A673 (cell line): ENCODE measurements at regions of chr9 and their contacts with region 1.

Region 1: GRCh38 chr9:71058660-71059059 is 62.8 kb downstream of the TRPM3 start:
- DNase-seq: no peak
- H3K4me3 ChIP-seq: no peak overlapping the region
- H3K27ac ChIP-seq: no peak overlapping the region
- H3K4me1 ChIP-seq: no peaks in the 10 kb centered on the region
- H3K27me3 ChIP-seq: peaks cover 14% of the 10 kb centered on the region
- CTCF ChIP-seq: no peak

Region 2: GRCh38 chr9:70701163-70701562 is 357.5 kb before region 1 on chr9:
- CTCF ChIA-PET with region 1: no interaction called
- POLR2A ChIA-PET with region 1: no interaction called
- intact Hi-C with region 1: no loop called
- DNase-seq: no peak
- H3K4me3 ChIP-seq: no peak overlapping the region
- H3K27ac ChIP-seq: no peak overlapping the region
- H3K4me1 ChIP-seq: no peaks in the 10 kb centered on the region
- H3K27me3 ChIP-seq: no peaks in the 10 kb centered on the region
- CTCF ChIP-seq: no peak

Region 3: DNA sequence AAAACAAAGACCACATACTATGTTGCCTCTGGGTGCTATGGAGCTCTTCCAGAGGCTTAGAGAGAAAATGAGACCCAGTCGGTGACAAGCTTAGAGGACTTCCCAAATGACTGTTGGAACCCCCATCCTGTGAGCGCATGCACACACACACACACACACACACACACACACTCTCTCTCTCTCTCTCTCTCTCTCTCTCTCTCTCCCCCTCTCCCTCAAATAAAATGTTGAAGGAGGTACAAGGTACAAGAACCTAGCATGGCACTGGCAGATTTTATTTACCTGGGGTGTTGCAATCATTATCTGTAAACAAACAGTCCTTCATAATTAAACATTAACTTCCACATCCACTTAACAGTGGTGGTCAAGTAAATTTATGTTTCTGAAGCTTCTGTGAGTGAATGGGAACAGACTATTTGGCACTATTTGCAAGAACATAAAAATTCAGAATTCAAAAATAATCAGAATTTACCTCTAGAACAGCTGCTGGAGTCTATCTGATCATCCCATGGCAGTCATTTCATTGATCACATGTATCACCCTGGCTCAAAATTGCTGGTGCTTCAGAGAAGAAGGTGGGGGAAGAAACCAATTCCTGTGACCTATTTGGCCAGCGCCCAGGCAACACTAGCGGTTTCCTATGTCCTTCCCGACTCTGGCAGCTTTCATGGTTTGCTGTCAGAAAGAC is 37.9 kb after region 1 on chr9:
- CTCF ChIA-PET with region 1: no interaction called
- POLR2A ChIA-PET with region 1: interaction called, 13 read pairs
- intact Hi-C with region 1: no loop called
- DNase-seq: no peak
- H3K4me3 ChIP-seq: no peak overlapping the region
- H3K27ac ChIP-seq: no peak overlapping the region
- H3K4me1 ChIP-seq: no peaks in the 10 kb centered on the region
- H3K27me3 ChIP-seq: peaks cover 14% of the 10 kb centered on the region
- CTCF ChIP-seq: no peak